HCT116 (cell line): ENCODE measurements at regions of chr17 and their contacts with region 1.

Region 1: DNA sequence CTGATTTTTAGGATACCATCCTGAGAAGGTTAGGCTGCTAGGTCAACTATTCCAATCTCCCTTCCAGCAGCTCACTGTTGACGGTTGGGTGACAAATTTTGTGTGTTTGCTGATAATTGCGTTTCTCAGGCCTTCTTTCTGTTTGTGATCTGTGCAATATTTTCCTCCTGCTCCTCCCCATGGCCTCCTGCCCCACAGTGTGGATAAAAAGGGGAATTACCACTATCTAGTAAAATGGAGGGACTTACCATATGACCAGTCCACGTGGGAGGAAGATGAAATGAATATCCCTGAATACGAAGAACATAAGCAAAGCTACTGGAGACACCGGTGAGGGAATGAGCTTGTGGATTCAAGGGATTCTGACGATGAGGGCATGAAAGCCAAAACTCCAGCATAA is 9.2 kb downstream of the CHD3 start:
- DNase-seq: no peak
- ATAC-seq: peak; percentile 64
- H3K4me3 ChIP-seq: no peak overlapping the region
- H3K27ac ChIP-seq: no peak overlapping the region
- H3K4me1 ChIP-seq: no peaks in the 10 kb centered on the region; a peak in 1 of 4 replicates
- H3K27me3 ChIP-seq: no peaks in the 10 kb centered on the region
- CTCF ChIP-seq: peak; percentile 34 to 69 (median 59); a peak in 4 of 6 replicates
- POLR2A ChIP-seq: no peak
- RAD21 ChIP-seq: peak; percentile 77

Region 2: DNA sequence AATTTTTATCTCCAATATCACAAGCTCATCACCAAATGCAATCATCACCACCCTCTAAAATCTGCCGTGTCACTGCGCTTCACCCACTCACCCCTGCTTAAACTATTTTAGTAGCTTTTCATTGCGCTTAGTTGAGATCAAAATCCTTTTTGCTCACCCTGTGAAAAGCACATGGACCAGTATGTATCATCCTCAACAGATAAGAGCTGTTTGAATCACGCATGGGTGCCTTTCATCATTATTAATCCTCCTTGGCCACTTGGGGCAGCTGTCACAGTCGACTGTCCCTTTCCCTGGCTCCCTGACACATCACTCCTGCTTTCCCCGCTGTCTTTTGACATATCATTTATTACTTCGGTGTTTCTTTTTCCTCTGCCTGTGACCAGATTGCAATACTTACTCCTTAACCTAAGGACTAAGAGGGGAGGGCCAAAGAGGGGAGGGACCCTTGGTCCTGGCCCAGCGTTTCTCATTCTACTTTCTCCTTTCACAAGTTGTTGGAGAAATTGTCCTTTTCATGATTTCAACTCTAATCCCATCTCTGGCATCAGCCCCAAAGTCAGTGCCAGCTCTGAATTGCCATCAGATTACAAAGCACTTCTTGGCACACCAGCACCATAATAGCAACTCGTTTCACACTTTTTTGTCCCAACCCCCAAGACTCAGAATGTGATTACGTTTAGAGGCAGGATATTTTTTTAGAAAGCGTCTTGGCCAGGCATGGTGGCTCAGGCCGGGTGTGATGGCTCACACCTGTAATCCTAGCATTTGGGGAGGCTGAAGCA is 72.4 kb before region 1 on chr17:
- CTCF ChIA-PET with region 1: no interaction called
- POLR2A ChIA-PET with region 1: interaction called, 4 read pairs
- RAD21 ChIA-PET with region 1: no interaction called
- intact Hi-C with region 1: loop called (anchors 5 kb)
- DNase-seq: no peak
- ATAC-seq: peak; percentile 72
- H3K4me3 ChIP-seq: no peak overlapping the region
- H3K27ac ChIP-seq: no peak overlapping the region
- H3K4me1 ChIP-seq: peaks cover 0 to 15% of the 10 kb centered on the region in 2 experiments; a peak in 2 of 4 replicates
- H3K27me3 ChIP-seq: no peaks in the 10 kb centered on the region
- CTCF ChIP-seq: peak in 2 of 3 experiments; percentile 36 to 43; a peak in 4 of 6 replicates
- POLR2A ChIP-seq: no peak
- RAD21 ChIP-seq: peak; percentile 27; the same call in 1 of the 2 replicates

Region 3: GRCh38 chr17:7862692-7863437 is 34.9 kb before region 1 on chr17:
- CTCF ChIA-PET with region 1: interaction called, 4 read pairs
- POLR2A ChIA-PET with region 1: no interaction called
- RAD21 ChIA-PET with region 1: interaction called in 1 of 2 experiments, 4 read pairs
- intact Hi-C with region 1: loop called (anchors 1 kb)
- DNase-seq: no peak
- ATAC-seq: no peak
- H3K4me3 ChIP-seq: no peak overlapping the region
- H3K27ac ChIP-seq: no peak overlapping the region
- H3K4me1 ChIP-seq: peaks cover 6 to 24% of the 10 kb centered on the region in 2 experiments
- H3K27me3 ChIP-seq: no peaks in the 10 kb centered on the region
- CTCF ChIP-seq: peak; percentile 66 to 88 (median 74)
- POLR2A ChIP-seq: no peak
- RAD21 ChIP-seq: peak; percentile 89

Region 4: DNA sequence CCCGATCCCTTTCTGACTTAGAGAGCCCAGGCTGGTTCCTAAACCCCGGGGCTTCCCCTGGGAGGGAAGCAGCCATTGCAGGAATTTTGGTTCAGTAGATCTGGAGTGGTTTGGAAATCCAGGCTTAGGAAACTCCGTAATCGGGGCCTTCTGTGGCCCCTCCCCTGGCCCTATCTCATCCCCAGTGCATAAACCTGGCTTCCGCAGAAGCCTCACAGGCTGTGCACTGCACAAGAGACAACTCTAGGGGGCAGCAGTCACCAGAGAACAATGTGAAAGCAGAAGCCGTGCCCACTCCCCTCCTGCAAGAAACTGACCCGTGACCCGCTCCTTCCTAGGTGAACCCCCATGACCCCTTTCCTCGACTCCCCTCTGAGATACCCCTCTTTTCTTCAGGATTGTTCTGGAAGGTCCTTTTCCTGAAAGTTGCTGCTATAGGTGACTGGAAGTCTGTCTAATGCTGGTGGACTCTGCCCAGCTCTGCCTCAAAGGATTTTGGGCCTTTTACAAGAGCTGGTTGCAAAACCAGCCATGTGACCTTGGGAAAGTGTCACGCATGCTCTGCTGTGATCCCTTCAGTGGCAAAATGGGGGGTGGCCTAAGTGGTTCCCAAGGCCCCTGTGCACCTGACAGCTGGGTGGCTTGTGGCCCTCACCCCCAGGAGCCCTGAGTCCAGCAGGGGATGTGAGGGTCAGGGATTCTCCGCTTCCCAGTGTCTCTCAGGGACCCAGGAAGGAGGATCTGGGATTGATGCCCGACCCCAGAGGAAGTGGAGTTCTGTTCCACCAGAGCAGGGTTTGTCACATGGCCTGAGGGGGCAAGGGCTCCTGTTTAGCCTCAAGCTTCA is 119.1 kb after region 1 on chr17:
- CTCF ChIA-PET with region 1: no interaction called
- POLR2A ChIA-PET with region 1: no interaction called
- RAD21 ChIA-PET with region 1: no interaction called
- intact Hi-C with region 1: no loop called
- DNase-seq: no peak
- ATAC-seq: peak; percentile 87
- H3K4me3 ChIP-seq: peak overlapping the region; percentile 50 to 65
- H3K27ac ChIP-seq: peak overlapping the region; percentile 48; the same call in 1 of the 2 replicates
- H3K4me1 ChIP-seq: peaks cover 8 to 45% of the 10 kb centered on the region in 2 experiments; a peak in 3 of 4 replicates
- H3K27me3 ChIP-seq: no peaks in the 10 kb centered on the region
- CTCF ChIP-seq: peak; percentile 74 to 88 (median 86)
- POLR2A ChIP-seq: no peak
- RAD21 ChIP-seq: peak; percentile 80